Activated CD4-positive, alpha-beta memory T cell treated with anti-CD3 and anti-CD28 coated beads for 36 hours (primary cell): ENCODE measurements at regions of chr3 and their contacts with region 1.

Region 1: DNA sequence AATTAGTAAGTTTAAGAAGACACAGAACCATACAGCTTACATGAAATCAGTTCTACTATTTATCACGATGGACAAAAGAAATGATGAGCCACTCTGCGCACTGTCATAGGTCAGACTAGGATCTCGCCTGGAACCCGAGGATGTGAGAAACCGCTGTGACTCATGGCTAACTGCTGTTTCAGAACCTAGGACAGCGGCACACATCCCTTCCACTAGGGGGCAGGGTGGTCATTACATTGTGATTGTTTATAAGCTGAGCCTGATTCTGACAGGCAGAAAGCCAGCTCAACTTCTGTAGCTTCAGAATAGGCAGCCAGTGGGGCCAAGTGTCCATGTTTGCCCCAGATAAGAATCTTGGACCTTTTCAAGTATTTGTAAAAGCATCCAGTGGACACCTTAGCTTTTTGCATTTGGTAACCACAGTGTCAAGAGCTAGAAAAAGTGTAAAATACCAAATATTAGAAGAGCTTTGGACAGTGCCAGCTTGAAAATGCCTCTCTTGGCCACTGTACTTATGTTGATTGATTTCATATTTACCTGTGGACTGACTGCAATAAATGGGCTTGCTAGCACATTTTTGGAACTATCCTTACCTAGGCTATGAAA is 115.8 kb downstream of the KBTBD8 start:
- DNase-seq: peak; percentile 91
- H3K4me3 Mint-ChIP-seq: no peak overlapping the region
- H3K27ac Mint-ChIP-seq: peak overlapping the region; percentile 13
- H3K4me1 Mint-ChIP-seq: peaks cover 6% of the 10 kb centered on the region
- H3K27me3 Mint-ChIP-seq: peaks cover 22% of the 10 kb centered on the region

Region 2: GRCh38 chr3:66938338-66938963 is 175.5 kb before region 1 on chr3:
- CTCF ChIA-PET with region 1: interaction called, 12 read pairs
- POLR2A ChIA-PET with region 1: no interaction called
- intact Hi-C with region 1: no loop called
- DNase-seq: peak; percentile 29
- H3K4me3 Mint-ChIP-seq: no peak overlapping the region
- H3K27ac Mint-ChIP-seq: no peak overlapping the region
- H3K4me1 Mint-ChIP-seq: no peaks in the 10 kb centered on the region
- H3K27me3 Mint-ChIP-seq: peaks cover 6% of the 10 kb centered on the region

Region 3: GRCh38 chr3:67123914-67124313 is 10.0 kb after region 1 on chr3:
- CTCF ChIA-PET with region 1: interaction called, 11 read pairs
- POLR2A ChIA-PET with region 1: no interaction called
- intact Hi-C with region 1: no loop called
- DNase-seq: no peak
- H3K4me3 Mint-ChIP-seq: no peak overlapping the region
- H3K27ac Mint-ChIP-seq: no peak overlapping the region
- H3K4me1 Mint-ChIP-seq: no peaks in the 10 kb centered on the region
- H3K27me3 Mint-ChIP-seq: peaks cover 12% of the 10 kb centered on the region

Region 4: GRCh38 chr3:67154429-67154828 is 40.5 kb after region 1 on chr3:
- CTCF ChIA-PET with region 1: no interaction called
- POLR2A ChIA-PET with region 1: no interaction called
- intact Hi-C with region 1: no loop called
- DNase-seq: no peak
- H3K4me3 Mint-ChIP-seq: no peak overlapping the region
- H3K27ac Mint-ChIP-seq: no peak overlapping the region
- H3K4me1 Mint-ChIP-seq: no peaks in the 10 kb centered on the region
- H3K27me3 Mint-ChIP-seq: no peaks in the 10 kb centered on the region

Region 5: GRCh38 chr3:67357610-67358458 is 243.9 kb after region 1 on chr3:
- CTCF ChIA-PET with region 1: interaction called, 11 read pairs
- POLR2A ChIA-PET with region 1: no interaction called
- intact Hi-C with region 1: loop called (anchors 5 kb)
- DNase-seq: no peak
- H3K4me3 Mint-ChIP-seq: no peak overlapping the region
- H3K27ac Mint-ChIP-seq: no peak overlapping the region
- H3K4me1 Mint-ChIP-seq: peaks cover 23% of the 10 kb centered on the region
- H3K27me3 Mint-ChIP-seq: peaks cover 1% of the 10 kb centered on the region

Region 6: DNA sequence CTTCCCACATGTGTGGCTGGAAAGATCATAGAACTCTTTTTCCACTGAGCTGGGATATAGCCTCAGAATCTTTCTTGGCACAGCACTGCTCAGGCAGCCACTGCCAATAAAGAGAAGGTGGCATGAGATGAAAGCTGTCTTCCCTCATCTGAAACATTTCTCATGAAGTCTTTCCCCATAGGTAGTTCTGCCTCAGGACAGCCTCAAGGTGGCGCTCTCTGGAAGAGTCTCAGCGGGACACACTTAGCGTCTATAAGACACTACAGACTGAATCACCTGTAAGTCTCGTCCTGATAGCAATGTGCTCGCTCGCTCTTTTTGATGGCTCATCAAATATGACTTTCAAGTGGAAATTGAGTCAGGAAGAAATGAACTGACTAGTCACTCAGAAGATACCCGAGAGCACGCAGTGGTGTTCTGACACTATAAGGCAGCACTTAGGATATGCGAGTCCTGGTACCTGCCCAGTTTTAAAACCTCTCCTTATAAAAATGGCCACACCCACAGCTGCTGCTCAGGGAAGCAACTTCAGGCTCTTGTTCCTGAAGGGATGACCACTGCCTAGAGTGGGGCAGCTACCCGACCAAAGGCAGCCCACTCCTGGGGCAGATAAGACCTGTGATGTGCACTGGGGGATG is 271.0 kb after region 1 on chr3:
- CTCF ChIA-PET with region 1: interaction called, 13 read pairs
- POLR2A ChIA-PET with region 1: no interaction called
- intact Hi-C with region 1: no loop called
- DNase-seq: peak; percentile 61
- H3K4me3 Mint-ChIP-seq: no peak overlapping the region
- H3K27ac Mint-ChIP-seq: no peak overlapping the region
- H3K4me1 Mint-ChIP-seq: peaks cover 20% of the 10 kb centered on the region
- H3K27me3 Mint-ChIP-seq: no peaks in the 10 kb centered on the region

Region 7: DNA sequence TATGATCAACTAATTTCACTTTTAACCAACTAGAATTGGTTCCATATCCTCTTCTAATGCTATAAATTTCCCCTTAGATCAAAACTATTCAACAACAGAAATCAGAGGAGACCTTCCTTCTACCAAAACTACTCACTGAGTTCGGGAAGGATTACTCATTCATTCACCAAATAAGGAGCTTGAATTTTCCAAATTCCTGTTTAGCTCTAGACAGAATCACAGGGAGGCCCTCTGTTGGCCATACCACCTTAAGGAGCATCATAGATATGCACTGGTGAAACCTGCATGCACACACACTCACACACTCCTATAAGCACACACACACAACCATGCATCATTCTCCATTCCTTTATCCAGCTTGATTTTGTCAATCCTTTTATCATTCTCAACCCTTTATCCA is 491.5 kb after region 1 on chr3:
- CTCF ChIA-PET with region 1: no interaction called
- POLR2A ChIA-PET with region 1: no interaction called
- intact Hi-C with region 1: loop called (anchors 10 kb)
- DNase-seq: no peak
- H3K4me3 Mint-ChIP-seq: no peak overlapping the region
- H3K27ac Mint-ChIP-seq: peak overlapping the region; percentile 31
- H3K4me1 Mint-ChIP-seq: peaks cover 48% of the 10 kb centered on the region
- H3K27me3 Mint-ChIP-seq: no peaks in the 10 kb centered on the region

Region 8: GRCh38 chr3:67790043-67790442 is 676.1 kb after region 1 on chr3:
- CTCF ChIA-PET with region 1: interaction called, 40 read pairs
- POLR2A ChIA-PET with region 1: no interaction called
- intact Hi-C with region 1: loop called (anchors 1 kb)
- DNase-seq: peak; percentile 73
- H3K4me3 Mint-ChIP-seq: no peak overlapping the region
- H3K27ac Mint-ChIP-seq: no peak overlapping the region
- H3K4me1 Mint-ChIP-seq: peaks cover 5% of the 10 kb centered on the region
- H3K27me3 Mint-ChIP-seq: no peaks in the 10 kb centered on the region